ENCODE measurements at regions of chr10 and their contacts with region 1.

Region 1: DNA sequence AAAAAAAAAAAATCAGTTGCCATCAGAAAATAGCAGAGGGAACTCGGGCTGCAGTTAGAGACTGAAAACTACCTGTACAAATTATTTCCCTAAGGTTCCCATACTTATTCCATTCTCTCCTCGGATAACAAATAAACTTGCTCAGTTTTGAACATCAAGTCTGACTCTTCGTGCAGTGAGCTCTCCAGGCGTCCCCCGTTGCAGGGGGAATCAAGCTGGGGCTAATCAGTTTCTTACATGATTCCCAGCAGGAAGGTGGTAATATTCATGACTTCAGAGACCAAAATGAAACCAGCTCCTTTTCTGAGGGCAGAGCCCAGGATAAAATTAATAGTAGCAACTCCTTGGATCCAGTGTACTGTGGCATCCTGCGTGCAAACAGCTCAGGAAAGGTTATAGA is 135.3 kb downstream of the FRMD4A start:
- DNase-seq: no peak
- H3K4me3 ChIP-seq: no peak overlapping the region
- H3K27ac ChIP-seq: no peak overlapping the region
- H3K4me1 ChIP-seq: no peaks in the 10 kb centered on the region
- H3K27me3 ChIP-seq: peaks cover 5% of the 10 kb centered on the region; the same call in 1 of the 2 replicates
- CTCF ChIP-seq: no peak
- EP300 ChIP-seq: no peak
- RAD21 ChIP-seq: no peak

Region 2: GRCh38 chr10:14208231-14208630 is 12.8 kb after region 1 on chr10:
- CTCF ChIA-PET with region 1: interaction called, 20 read pairs
- POLR2A ChIA-PET with region 1: no interaction called
- DNase-seq: no peak
- H3K4me3 ChIP-seq: no peak overlapping the region
- H3K27ac ChIP-seq: no peak overlapping the region
- H3K4me1 ChIP-seq: no peaks in the 10 kb centered on the region
- H3K27me3 ChIP-seq: no peaks in the 10 kb centered on the region; the same call in 1 of the 2 replicates
- CTCF ChIP-seq: no peak
- EP300 ChIP-seq: no peak
- RAD21 ChIP-seq: no peak

Region 3: DNA sequence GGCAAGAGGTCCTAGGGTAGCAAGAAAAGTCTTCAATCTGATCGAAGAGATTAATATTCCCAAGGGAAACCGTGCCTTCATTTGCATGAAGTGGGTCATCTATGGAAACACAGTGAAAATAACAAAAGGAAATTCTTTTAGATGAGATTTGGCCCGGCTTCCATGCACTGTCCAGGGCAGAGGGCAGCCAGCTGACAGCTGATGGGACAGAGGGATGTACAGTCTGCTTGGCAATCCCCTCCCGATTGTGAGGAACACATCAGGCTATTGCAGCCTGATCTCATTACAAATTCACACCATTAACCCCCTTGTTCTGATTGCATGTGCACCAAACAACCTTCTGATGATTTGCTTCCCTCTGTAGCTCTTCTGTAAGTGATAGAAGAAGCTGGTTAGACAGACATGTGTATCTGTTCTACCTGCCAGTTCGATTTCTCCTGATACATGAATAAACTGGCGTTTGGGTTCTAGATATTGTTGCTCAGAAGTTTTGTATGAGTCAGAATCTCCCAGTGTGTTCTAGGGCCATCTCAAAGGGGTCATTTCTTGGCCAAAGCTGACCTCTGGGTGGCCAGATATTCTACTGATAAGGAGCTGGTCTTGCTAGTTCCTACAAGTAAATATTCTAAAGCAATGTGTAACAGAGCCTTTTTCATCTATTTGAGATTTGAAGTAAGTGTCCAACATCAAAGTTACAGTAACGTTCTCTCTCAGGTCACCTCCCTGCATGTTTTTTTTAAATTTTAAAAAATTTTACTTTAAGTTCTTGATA is 30.1 kb after region 1 on chr10:
- CTCF ChIA-PET with region 1: interaction called, 10 read pairs
- POLR2A ChIA-PET with region 1: no interaction called
- DNase-seq: no peak
- H3K4me3 ChIP-seq: no peak overlapping the region
- H3K27ac ChIP-seq: no peak overlapping the region
- H3K4me1 ChIP-seq: no peaks in the 10 kb centered on the region
- H3K27me3 ChIP-seq: peaks cover 8% of the 10 kb centered on the region
- CTCF ChIP-seq: no peak
- EP300 ChIP-seq: no peak
- RAD21 ChIP-seq: no peak

Measured in SK-N-SH (cell line).